ENCODE measurements at regions of chr16 and their contacts with region 1.

Region 1: DNA sequence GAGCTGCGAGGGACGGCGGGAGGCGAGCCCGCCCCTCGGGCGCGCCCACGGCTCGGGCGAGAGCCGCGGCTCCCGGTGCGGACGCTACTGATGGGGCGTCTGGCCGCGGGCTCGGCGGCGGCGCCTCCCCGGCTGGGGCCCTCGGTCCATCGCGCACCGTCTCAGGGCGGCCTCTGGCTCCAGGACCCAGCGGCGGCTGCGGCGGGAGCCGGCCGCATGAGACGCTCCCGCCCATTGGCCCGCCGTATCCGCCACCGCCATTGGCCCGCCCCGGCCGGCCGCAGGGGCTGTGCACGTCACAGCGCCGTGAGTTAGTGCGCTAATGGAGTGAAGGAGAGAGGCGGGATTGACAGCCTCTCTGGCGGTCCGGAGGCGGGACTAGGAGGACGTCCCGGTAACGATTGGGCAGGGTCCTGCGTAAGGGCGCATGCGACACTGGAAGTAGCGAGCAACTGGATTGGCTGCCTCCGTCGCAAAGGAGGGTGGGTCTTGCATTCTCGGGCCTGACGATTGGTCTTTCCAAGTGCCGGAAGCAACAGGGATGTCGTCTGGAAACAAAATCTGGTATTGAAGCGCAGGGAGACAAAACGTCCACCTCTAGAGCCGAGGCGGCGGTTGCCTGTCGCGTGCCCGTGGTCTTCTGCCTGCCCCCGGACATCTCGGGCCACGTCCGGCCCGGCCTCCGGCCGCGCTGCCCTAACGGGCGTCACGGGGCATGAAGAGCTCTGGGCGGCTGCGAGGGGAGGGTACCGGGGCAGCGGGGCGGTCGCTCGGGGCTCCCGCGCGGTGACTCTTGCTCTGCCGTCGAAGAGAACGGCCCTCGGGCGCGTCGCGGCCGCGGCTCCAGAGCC is at the start of gene ANKRD11:
- DNase-seq: peak; percentile 99
- H3K4me3 Mint-ChIP-seq: peak within 1 kb of the TSS; percentile 92
- H3K27ac Mint-ChIP-seq: peak within 1 kb of the TSS; percentile 94
- H3K4me1 Mint-ChIP-seq: peaks cover 51% of the 10 kb centered on the region
- H3K27me3 Mint-ChIP-seq: no peaks in the 10 kb centered on the region
- total RNA-seq, gene ANKRD11: 199 to 208 TPM

Region 2: DNA sequence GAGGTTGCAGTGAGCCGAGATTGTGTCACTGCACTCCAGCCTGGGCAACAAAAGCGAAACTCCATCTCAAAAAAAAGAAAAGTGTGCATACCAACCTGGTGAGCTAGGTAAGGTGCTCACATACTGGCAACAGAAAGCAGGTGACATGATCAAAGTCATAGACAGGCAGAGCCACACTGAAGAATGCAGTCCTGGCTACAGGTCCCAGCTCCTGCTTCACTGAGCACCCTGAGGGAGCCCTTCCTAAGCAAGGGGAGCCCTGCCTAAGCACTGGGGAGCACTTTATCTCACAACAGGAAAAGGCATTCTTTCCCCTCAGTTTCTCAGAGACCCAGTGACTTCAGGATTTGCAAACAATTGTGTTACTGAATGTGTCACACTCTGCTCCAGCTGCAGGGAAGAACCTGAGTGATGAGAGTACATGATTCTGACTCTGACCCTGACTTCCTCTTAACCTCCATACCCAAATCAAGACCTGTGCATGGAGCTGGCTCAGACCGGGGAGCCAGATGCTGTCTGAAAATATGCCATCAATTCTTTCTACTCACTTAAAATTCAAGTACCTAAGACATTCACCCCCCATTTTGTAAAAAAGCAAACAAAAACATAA is 40.8 kb before region 1 on chr16:
- CTCF ChIA-PET with region 1: interaction called, 4 read pairs
- POLR2A ChIA-PET with region 1: interaction called, 11 read pairs
- DNase-seq: no peak
- H3K4me3 Mint-ChIP-seq: no peak overlapping the region
- H3K27ac Mint-ChIP-seq: peak overlapping the region; percentile 49
- H3K4me1 Mint-ChIP-seq: peaks cover 86% of the 10 kb centered on the region
- H3K27me3 Mint-ChIP-seq: no peaks in the 10 kb centered on the region

Measured in activated CD4-positive, alpha-beta memory T cell treated with anti-CD3 and anti-CD28 coated beads, Interleukin-2, amount 10 ng/mL, durations not matched to agents 7 days and 5 days (primary cell).